Activated CD4-positive, alpha-beta memory T cell treated with anti-CD3 and anti-CD28 coated beads for 36 hours (primary cell): ENCODE measurements at regions of chr15 and their contacts with region 1.

Region 1: DNA sequence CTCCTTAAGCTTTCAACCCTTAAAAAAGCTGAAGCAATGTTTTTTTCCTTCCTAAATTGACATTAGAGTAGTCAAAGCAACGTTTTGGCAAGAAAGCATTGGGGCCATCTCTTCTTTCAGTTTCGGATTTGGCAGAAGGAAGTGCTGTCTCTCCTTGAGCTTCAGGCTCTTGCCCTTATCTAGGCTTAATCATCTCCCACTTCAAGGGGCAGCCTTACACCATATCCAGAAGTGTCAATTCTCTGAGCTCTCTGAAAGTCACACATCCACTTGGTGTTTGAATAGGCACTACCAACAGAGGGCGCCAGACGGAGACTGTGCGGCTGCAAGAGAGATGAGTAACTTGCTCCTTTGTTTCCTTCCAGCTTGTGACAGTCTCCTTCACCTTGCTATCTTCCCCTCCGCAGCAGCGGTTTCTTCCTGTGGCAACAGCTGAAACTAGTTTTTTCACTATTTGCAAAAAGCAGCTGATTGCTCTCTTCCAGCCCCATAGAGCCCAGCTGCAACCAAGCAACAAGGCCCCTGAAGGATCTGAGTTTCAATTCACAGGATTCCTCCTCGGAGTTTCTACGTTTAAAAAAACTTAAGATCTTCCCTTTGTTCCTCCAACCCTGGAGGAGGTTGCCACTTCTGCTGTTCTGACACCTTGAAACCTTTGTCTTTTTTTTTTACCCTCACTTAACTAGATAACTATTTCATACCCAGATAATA is 147.0 kb upstream of the SLCO3A1 start:
- DNase-seq: peak; percentile 91
- H3K4me3 Mint-ChIP-seq: no peak overlapping the region
- H3K27ac Mint-ChIP-seq: no peak overlapping the region
- H3K4me1 Mint-ChIP-seq: peaks cover 14% of the 10 kb centered on the region
- H3K27me3 Mint-ChIP-seq: no peaks in the 10 kb centered on the region

Region 2: DNA sequence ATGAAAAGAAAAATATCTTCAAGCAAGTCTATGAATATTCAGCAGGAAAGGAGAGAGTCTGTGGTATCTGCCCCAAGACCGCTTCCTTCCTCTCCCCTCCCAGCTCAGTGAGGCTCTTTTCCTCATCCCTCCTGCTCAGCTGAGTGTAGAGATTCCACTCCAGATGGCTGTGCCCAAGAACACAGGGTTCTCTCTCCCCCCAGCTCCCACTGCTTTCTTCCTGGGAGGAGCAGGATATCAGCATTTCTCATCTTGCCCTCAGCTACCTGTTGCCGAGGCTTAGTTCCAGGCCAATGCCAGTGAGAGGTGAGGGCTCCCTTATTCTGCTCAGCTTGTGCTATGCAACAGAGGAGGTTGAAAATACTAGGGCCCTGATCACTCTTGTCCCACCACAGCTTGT is 394.5 kb before region 1 on chr15:
- CTCF ChIA-PET with region 1: interaction called, 11 read pairs
- POLR2A ChIA-PET with region 1: no interaction called
- intact Hi-C with region 1: no loop called
- DNase-seq: peak; percentile 44
- H3K4me3 Mint-ChIP-seq: no peak overlapping the region
- H3K27ac Mint-ChIP-seq: no peak overlapping the region
- H3K4me1 Mint-ChIP-seq: peaks cover 62% of the 10 kb centered on the region
- H3K27me3 Mint-ChIP-seq: peaks cover 3% of the 10 kb centered on the region

Region 3: GRCh38 chr15:91660174-91660653 is 46.3 kb before region 1 on chr15:
- CTCF ChIA-PET with region 1: interaction called, 16 read pairs
- POLR2A ChIA-PET with region 1: no interaction called
- intact Hi-C with region 1: no loop called
- DNase-seq: no peak
- H3K4me3 Mint-ChIP-seq: no peak overlapping the region
- H3K27ac Mint-ChIP-seq: no peak overlapping the region
- H3K4me1 Mint-ChIP-seq: peaks cover 12% of the 10 kb centered on the region
- H3K27me3 Mint-ChIP-seq: peaks cover 12% of the 10 kb centered on the region

Region 4: GRCh38 chr15:91717811-91718210 is 11.3 kb after region 1 on chr15:
- CTCF ChIA-PET with region 1: interaction called, 10 read pairs
- POLR2A ChIA-PET with region 1: interaction called, 3 read pairs
- intact Hi-C with region 1: no loop called
- DNase-seq: no peak
- H3K4me3 Mint-ChIP-seq: no peak overlapping the region
- H3K27ac Mint-ChIP-seq: no peak overlapping the region
- H3K4me1 Mint-ChIP-seq: no peaks in the 10 kb centered on the region
- H3K27me3 Mint-ChIP-seq: peaks cover 17% of the 10 kb centered on the region

Region 5: GRCh38 chr15:92011611-92012367 is 305.3 kb after region 1 on chr15:
- CTCF ChIA-PET with region 1: interaction called, 8 read pairs
- POLR2A ChIA-PET with region 1: no interaction called
- intact Hi-C with region 1: loop called (anchors 1 kb)
- DNase-seq: peak; percentile 67
- H3K4me3 Mint-ChIP-seq: peak overlapping the region; percentile 39
- H3K27ac Mint-ChIP-seq: peak overlapping the region; percentile 66
- H3K4me1 Mint-ChIP-seq: peaks cover 71% of the 10 kb centered on the region
- H3K27me3 Mint-ChIP-seq: no peaks in the 10 kb centered on the region